ENCODE measurements at regions of chr11 and their contacts with region 1.

Region 1: DNA sequence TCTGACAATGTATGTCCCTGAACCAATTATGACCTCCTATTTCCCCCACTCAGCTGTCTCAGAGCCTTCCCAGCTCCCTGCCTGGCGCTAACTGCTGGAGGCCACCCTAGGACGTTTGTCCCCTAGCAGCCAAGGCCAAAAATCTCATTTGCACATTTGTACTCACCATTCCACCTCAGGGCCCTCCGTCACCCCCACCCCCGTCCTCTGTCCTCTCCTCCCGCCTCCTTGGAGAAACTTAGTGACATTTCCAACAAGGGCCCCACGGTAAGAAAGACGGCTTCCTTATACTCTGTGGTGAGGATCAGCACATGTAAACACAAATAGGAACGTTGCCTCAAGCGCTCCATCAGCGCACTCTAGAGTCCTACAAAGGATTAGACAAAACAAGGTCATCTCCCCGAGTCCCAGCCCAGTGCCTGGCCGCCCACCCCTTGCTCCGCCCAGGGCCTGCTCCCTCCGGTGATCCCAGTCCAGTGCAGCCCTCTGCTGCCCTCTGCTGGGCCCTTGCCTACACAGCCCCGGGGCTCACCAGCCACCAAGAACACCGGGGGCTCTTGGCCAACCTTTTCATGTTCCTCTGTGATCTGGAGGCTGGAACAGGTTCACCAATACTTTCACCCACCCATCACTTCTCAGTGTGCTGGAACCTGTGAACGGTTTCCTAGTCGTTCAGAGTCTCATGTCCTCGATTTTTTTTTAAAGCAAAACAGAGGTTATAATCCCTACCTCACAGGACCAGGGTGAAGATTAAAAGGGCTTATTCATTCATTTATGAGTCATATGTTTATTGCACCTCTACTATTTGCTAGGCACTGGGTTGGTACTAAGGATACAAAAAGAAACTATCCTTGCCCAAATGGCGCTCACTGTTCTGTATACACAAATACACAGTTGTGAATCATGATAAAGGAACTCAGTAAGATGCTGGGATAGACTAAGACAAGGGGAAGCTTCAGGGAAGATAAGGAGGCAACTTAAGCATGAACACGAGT is 15.3 kb upstream of the CTR9 start:
- DNase-seq: peak; percentile 96 to 98 (median 96)
- H3K4me3 ChIP-seq: no peak overlapping the region
- H3K27ac ChIP-seq: peak overlapping the region in 1 of 2 donors; percentile 55
- H3K4me1 ChIP-seq: peaks cover 2% of the 10 kb centered on the region
- H3K27me3 ChIP-seq: no peaks in the 10 kb centered on the region
- CTCF ChIP-seq: peak; percentile 98 to 99 (median 98)
- EP300 ChIP-seq: no peak
- POLR2A ChIP-seq: no peak

Region 2: GRCh38 chr11:9757809-9758636 is 977.8 kb before region 1 on chr11:
- intact Hi-C with region 1: loop called in 1 of 4 experiments (anchors 10 kb)
- DNase-seq: peak; percentile 86 to 92 (median 90)
- H3K4me3 ChIP-seq: peak overlapping the region; percentile 56
- H3K27ac ChIP-seq: peak overlapping the region; percentile 78 to 83
- H3K4me1 ChIP-seq: peaks cover 16% of the 10 kb centered on the region
- H3K27me3 ChIP-seq: no peaks in the 10 kb centered on the region
- CTCF ChIP-seq: peak; percentile 72 to 98 (median 98)
- EP300 ChIP-seq: no peak
- POLR2A ChIP-seq: peak; percentile 41

Region 3: DNA sequence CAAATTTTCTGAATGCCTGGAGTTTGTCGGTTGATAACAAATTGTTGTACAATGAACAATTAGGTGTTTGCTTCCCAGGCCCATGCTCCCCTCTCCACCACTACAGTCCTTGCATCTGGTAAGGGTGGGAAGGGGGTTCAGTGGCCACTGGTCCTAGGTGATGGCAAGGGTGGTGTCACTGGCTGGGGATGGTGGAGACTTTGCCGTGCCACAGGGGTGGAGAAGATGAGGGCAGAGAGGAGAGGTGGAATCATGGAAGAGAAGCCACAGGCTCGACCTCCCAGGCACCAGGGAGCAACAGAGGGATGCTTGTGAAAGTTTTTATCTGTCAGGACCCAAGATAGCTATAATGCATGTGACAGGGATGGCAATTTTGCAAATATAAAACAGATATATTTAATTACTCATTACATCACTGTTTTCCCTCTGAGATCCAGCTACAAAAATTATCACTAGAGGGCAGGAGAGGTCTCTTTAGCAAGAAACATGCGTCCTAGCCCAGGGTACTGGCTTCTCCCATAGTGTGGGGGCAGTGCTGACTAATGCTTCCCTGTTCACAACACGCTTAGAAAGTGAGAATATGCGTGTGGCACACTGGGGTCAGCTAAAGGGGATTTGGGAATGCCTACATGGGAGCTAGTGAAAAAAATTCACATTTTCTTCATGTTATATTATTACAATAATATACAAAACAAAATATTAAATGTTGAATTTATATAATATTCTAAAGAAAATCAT is 329.8 kb before region 1 on chr11:
- intact Hi-C with region 1: loop called (anchors 2 to 5 kb)
- DNase-seq: peak; percentile 56 to 79 (median 70)
- H3K4me3 ChIP-seq: no peak overlapping the region
- H3K27ac ChIP-seq: no peak overlapping the region
- H3K4me1 ChIP-seq: peaks cover 2% of the 10 kb centered on the region
- H3K27me3 ChIP-seq: no peaks in the 10 kb centered on the region
- CTCF ChIP-seq: peak; percentile 58 to 75 (median 73)
- EP300 ChIP-seq: no peak
- POLR2A ChIP-seq: no peak

Region 4: GRCh38 chr11:10564696-10565318 is 171.0 kb before region 1 on chr11:
- intact Hi-C with region 1: loop called in 1 of 4 experiments (anchors 10 kb)
- DNase-seq: peak in 1 of 5 donors; percentile 35
- H3K4me3 ChIP-seq: no peak overlapping the region
- H3K27ac ChIP-seq: no peak overlapping the region
- H3K4me1 ChIP-seq: no peaks in the 10 kb centered on the region
- H3K27me3 ChIP-seq: no peaks in the 10 kb centered on the region
- CTCF ChIP-seq: peak in 2 of 3 donors; percentile 43 to 49
- EP300 ChIP-seq: no peak
- POLR2A ChIP-seq: no peak

Region 5: GRCh38 chr11:10657308-10658271 is 78.2 kb before region 1 on chr11:
- intact Hi-C with region 1: loop called in 1 of 4 experiments (anchors 2 kb)
- DNase-seq: peak in 3 of 5 donors; percentile 42 to 53 (median 42)
- H3K4me3 ChIP-seq: no peak overlapping the region
- H3K27ac ChIP-seq: peak overlapping the region; percentile 27 to 57
- H3K4me1 ChIP-seq: peaks cover 39% of the 10 kb centered on the region
- H3K27me3 ChIP-seq: no peaks in the 10 kb centered on the region
- CTCF ChIP-seq: no peak
- EP300 ChIP-seq: no peak
- POLR2A ChIP-seq: no peak

Region 6: DNA sequence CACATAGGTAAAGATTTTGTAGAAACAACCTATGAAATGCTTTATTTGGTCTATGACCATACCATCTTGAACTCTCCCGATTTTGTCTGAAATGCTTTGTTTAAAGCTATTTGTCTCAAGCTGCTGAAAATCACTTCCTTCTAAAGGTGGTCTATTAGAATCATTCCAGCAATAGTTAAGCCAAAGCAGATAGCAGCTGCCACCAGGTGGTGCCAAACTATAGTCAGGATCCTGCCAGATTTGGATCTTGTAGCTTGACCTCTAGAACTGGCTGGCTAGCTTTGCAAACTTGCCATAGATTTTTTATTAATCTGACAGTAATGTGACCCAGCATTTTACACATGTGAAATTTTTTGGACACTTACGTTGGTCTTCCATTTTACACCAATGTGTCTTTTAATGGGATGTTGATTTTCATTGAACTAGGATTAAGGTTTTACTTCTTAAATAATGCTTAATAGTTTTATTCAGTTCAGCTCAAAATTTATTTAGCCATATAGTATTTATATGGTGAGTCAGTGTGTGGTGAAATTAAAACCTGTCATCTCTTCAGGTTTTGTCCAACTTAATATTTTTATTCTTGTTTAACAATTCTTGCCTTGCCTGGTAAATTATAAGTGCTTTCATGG is 35.0 kb after region 1 on chr11:
- intact Hi-C with region 1: no loop called
- DNase-seq: no peak
- H3K4me3 ChIP-seq: no peak overlapping the region
- H3K27ac ChIP-seq: no peak overlapping the region
- H3K4me1 ChIP-seq: no peaks in the 10 kb centered on the region
- H3K27me3 ChIP-seq: no peaks in the 10 kb centered on the region
- CTCF ChIP-seq: no peak
- EP300 ChIP-seq: no peak
- POLR2A ChIP-seq: no peak

Region 7: GRCh38 chr11:11078344-11079086 is 342.7 kb after region 1 on chr11:
- intact Hi-C with region 1: no loop called
- DNase-seq: no peak
- H3K4me3 ChIP-seq: no peak overlapping the region
- H3K27ac ChIP-seq: no peak overlapping the region
- H3K4me1 ChIP-seq: no peaks in the 10 kb centered on the region
- H3K27me3 ChIP-seq: no peaks in the 10 kb centered on the region
- CTCF ChIP-seq: no peak
- EP300 ChIP-seq: no peak
- POLR2A ChIP-seq: no peak